ENCODE measurements at regions of chr3 and their contacts with region 1.

Region 1: GRCh38 chr3:153161138-153161713 is 800 bp upstream of the RAP2B start:
- DNase-seq: peak; percentile 94 to 97 (median 96)
- ATAC-seq: peak; percentile 95 to 96
- H3K4me3 ChIP-seq: peak overlapping the region; percentile 84
- H3K27ac ChIP-seq: peak overlapping the region; percentile 90
- H3K4me1 ChIP-seq: no peaks in the 10 kb centered on the region
- H3K27me3 ChIP-seq: no peaks in the 10 kb centered on the region

Region 2: DNA sequence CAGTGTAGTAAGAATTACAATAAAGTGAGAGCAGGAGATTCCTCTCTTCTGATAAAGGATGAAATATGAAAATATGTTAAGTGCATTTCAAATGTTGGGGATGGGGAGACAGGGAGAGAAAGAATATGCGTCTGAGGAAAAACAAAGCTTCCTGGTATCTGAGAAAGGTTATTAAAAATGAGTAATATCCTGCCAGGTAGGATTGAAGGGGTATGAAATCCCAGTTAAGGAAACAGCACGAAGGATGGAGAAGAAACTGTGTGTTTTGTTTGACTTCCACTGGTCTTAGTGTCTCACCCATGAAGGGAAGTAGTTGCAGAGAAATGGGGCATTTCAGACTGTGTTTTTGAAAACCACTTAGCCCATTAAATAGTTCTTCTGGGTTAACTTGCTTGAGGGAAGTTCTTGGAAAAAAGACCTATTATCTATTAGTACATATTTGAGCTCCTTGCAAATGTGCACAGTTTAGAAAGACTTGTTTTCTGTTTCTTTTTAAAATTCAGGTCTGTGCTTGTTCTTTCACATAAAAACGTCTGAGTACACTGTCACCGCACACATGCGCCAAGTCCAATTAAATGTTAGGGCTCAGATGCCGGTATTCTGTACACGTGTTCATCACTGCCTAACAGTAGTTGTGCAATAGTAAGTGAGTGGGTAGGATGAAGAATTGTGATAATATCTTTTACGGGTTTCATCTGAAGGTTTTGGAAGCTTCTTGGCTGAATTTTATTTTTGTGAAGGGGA is 522.3 kb before region 1 on chr3:
- intact Hi-C with region 1: no loop called
- DNase-seq: peak in 1 of 3 donors; percentile 59
- ATAC-seq: peak; percentile 45 to 70
- H3K4me3 ChIP-seq: no peak overlapping the region
- H3K27ac ChIP-seq: no peak overlapping the region
- H3K4me1 ChIP-seq: no peaks in the 10 kb centered on the region
- H3K27me3 ChIP-seq: no peaks in the 10 kb centered on the region

Region 3: GRCh38 chr3:153043729-153044328 is 117.4 kb before region 1 on chr3:
- intact Hi-C with region 1: loop called in 2 of 4 experiments (anchors 10 kb)
- DNase-seq: no peak
- ATAC-seq: peak; percentile 52 to 64
- H3K4me3 ChIP-seq: no peak overlapping the region
- H3K27ac ChIP-seq: no peak overlapping the region
- H3K4me1 ChIP-seq: no peaks in the 10 kb centered on the region
- H3K27me3 ChIP-seq: no peaks in the 10 kb centered on the region

Region 4: GRCh38 chr3:153284282-153284938 is 123.2 kb after region 1 on chr3:
- intact Hi-C with region 1: loop called in 1 of 4 experiments (anchors 5 kb)
- DNase-seq: peak; percentile 56 to 61 (median 57)
- ATAC-seq: peak; percentile 84 to 94
- H3K4me3 ChIP-seq: no peak overlapping the region
- H3K27ac ChIP-seq: no peak overlapping the region
- H3K4me1 ChIP-seq: peaks cover 2% of the 10 kb centered on the region
- H3K27me3 ChIP-seq: no peaks in the 10 kb centered on the region

Region 5: DNA sequence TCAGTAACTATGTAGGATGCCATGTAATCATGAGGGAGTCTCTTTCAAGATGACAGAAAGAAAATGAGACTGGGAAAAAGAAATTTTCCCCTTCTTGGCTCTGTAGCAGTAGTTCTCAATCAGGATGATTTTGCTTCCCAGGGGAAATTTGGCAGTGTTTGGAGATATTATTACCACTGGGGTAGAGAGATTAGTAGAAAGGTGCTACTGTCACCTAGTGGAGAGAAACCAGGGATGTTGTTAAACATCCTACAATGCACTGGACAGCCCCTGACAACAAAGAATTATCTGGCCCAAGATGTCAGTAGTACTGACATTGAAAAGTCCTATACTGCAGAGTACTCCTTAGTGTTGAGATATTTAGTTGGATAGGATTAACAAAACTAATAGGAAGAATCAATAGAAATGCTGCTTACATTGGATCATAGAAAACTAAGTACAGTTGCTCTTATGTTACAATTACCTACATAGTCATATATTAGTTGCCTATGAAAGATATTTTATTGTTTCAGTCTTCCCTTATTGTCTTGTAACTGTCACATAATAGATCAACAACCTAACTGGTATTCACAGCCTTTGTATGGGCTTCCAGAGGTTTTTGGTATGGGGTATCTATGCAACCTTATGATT is 434.1 kb after region 1 on chr3:
- intact Hi-C with region 1: loop called in 1 of 4 experiments (anchors 10 kb)
- DNase-seq: no peak
- ATAC-seq: peak; percentile 26 to 64
- H3K4me3 ChIP-seq: no peak overlapping the region
- H3K27ac ChIP-seq: no peak overlapping the region
- H3K4me1 ChIP-seq: peaks cover 5% of the 10 kb centered on the region
- H3K27me3 ChIP-seq: no peaks in the 10 kb centered on the region